Activated B cell treated with CpG ODN at 0.5 μM for 24 hours (primary cell): ENCODE measurements at regions of chr14 and their contacts with region 1.

Region 1: DNA sequence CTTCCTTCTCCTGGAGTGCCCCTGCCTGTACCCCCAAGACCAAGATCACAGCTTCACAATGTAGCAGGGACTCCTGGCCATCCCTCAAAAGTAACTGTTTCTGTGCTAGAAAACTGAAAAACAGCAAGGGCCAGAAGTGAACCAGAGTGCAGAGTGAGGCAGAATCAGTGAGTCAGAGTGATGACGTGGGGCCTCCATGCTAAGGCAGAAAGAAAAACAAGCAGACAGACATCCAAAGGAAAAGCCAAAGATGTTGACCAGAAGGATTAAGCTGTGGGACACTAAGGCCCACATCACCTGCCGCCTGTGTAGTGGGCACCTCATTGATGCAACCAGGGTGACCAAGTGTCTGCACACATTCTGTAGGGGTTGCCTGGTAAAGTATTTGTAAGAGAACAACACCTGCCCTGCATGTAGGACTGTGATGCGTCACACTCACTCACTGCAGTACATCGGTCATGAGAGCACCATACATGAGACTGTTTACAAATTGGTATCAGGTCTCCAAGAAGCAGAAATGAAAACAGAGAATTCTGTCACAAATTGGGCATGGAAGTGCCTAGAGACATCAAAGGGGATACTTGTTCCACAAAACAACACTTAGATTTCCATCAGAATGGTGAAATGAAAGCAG is 51.2 kb downstream of the ARMH4 start:
- DNase-seq: no peak
- ATAC-seq: no peak
- H3K4me3 Mint-ChIP-seq: no peak overlapping the region
- H3K27ac Mint-ChIP-seq: no peak overlapping the region
- H3K4me1 Mint-ChIP-seq: no peaks in the 10 kb centered on the region
- H3K27me3 Mint-ChIP-seq: no peaks in the 10 kb centered on the region
- CTCF ChIP-seq: no peak

Region 2: GRCh38 chr14:58082491-58083098 is 18.3 kb before region 1 on chr14:
- CTCF ChIA-PET with region 1: no interaction called
- POLR2A ChIA-PET with region 1: no interaction called
- intact Hi-C with region 1: no loop called
- DNase-seq: no peak
- ATAC-seq: no peak
- H3K4me3 Mint-ChIP-seq: no peak overlapping the region
- H3K27ac Mint-ChIP-seq: no peak overlapping the region
- H3K4me1 Mint-ChIP-seq: no peaks in the 10 kb centered on the region
- H3K27me3 Mint-ChIP-seq: peaks cover 10% of the 10 kb centered on the region
- CTCF ChIP-seq: no peak

Region 3: DNA sequence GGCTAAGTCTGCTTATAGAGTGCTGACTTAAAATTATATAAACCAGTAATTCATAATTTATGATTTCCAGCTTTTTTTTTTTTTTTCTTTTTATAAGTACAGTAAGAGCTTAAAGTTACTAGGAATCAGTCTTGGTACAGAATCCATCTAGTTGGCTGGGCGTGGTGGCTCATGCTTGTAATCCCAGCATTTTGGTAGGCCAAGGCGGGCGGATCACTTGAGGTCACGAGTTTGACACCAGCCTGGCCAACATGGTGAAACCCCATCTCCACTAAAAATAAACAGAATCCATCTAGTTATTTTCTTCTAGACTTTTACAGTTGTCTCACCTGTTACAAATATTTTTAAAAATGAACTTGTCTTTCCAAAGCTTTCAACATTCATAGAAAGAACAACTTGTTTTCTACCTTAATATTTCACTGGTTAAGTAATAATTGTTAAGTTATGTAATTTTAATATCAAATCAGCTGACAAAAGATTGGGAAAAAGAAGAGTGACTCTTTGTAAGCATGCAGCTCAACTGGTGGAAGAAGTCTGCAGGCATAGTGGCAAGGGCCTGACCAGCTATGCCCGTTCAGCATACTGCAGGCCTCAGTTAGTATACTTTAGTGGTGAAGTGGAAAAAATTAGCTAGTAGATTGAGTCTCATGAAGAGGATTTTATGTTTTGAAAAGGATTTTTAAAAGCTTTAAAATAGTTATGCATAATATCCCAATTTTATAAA is 126.4 kb after region 1 on chr14:
- CTCF ChIA-PET with region 1: no interaction called
- POLR2A ChIA-PET with region 1: interaction called, 11 read pairs
- intact Hi-C with region 1: no loop called
- DNase-seq: no peak
- ATAC-seq: no peak
- H3K4me3 Mint-ChIP-seq: no peak overlapping the region
- H3K27ac Mint-ChIP-seq: no peak overlapping the region
- H3K4me1 Mint-ChIP-seq: no peaks in the 10 kb centered on the region
- H3K27me3 Mint-ChIP-seq: no peaks in the 10 kb centered on the region
- CTCF ChIP-seq: no peak

Region 4: GRCh38 chr14:58439476-58439875 is 338.6 kb after region 1 on chr14:
- CTCF ChIA-PET with region 1: no interaction called
- POLR2A ChIA-PET with region 1: no interaction called
- intact Hi-C with region 1: no loop called
- DNase-seq: no peak
- ATAC-seq: no peak
- H3K4me3 Mint-ChIP-seq: no peak overlapping the region
- H3K27ac Mint-ChIP-seq: no peak overlapping the region
- H3K4me1 Mint-ChIP-seq: no peaks in the 10 kb centered on the region
- H3K27me3 Mint-ChIP-seq: no peaks in the 10 kb centered on the region
- CTCF ChIP-seq: no peak

Region 5: DNA sequence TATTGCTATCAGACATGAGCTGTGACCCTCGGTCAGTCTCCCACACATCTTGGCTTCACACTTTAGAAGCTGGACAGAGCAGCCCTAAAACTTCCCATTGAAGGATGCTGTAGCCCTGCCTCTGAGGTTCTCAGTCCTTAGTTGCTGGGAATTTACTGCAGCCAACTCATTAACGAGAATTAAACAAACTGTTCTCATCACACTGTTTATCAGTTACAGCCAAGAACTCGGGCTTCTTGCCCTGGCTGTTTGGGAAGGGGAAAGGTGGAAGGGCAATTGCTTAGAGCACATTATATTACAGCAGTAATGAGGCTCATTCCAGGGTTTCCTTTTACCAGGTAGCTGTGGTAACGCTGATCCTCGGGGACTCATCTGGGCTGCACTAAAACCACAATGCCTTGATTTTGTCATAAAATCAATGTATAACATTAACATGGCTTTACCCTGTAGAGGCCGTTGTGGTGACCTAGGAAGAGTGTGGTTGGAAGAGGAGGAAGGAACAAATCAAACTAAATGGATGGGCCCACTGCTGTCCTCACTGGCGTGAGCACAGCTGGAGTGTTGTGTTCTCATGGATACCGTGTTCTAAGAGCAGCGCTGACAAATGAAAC is 1277.2 kb after region 1 on chr14:
- CTCF ChIA-PET with region 1: no interaction called
- POLR2A ChIA-PET with region 1: no interaction called
- intact Hi-C with region 1: no loop called
- DNase-seq: no peak
- ATAC-seq: no peak
- H3K4me3 Mint-ChIP-seq: no peak overlapping the region
- H3K27ac Mint-ChIP-seq: no peak overlapping the region
- H3K4me1 Mint-ChIP-seq: no peaks in the 10 kb centered on the region
- H3K27me3 Mint-ChIP-seq: peaks cover 4% of the 10 kb centered on the region
- CTCF ChIP-seq: no peak